ENCODE measurements at regions of chr4 and their contacts with region 1.

Region 1: GRCh38 chr4:141133146-141133998 is at the start of gene RNF150:
- DNase-seq: peak; percentile 29 to 88
- H3K4me3 ChIP-seq: peak within 1 kb of the TSS; percentile 89 to 92
- H3K27ac ChIP-seq: peak within 1 kb of the TSS; percentile 72 to 75
- H3K4me1 ChIP-seq: no peaks in the 10 kb centered on the region
- H3K27me3 ChIP-seq: no peaks in the 10 kb centered on the region
- CTCF ChIP-seq: peak; percentile 59 to 83 (median 71)
- total RNA-seq, gene RNF150: 31.2 TPM

Region 2: DNA sequence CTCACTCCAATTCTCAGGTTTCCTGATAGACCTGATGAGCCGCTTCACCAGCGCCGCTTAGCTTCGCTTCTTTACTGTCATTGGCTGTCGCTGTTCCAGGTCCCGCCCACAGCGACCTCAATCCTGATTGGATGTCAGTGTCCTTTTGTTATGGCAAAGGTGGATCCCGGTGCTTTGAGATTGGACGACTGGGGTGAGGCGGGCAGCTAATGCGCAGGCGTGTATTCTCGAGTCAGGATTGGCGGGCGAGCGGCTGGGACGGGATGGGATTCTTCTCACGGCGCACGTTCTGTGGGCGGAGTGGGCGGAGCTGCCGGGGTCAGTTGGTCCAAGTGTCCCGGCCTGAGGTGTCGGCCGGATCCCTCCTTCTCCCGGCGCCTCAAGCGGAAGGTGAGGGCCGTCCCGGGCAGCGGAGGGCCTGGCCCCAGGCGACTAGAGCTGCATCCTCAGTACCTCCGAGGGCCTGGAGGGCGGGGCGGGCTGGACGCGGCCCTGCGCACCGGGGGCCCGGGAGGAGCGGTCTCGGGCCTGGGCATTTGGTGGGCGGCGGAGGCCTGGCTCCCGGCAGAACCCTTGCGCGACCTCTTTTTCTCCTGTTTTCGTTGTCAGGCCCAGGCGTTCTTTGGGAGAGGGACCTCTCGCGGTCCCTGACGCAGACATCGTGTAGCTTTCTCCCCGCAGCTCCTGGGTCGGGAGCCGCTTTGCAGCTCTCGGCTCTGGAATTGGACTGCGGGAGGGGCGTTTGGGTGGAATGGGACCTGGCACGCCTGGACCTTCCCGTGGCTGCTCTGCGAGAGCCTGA is 759.8 kb before region 1 on chr4 and contains the start of gene SCOC:
- intact Hi-C with region 1: loop called (anchors 5 kb)
- DNase-seq: peak; percentile 99 to 100
- H3K4me3 ChIP-seq: peak within 1 kb of the TSS; percentile 93 to 99
- H3K27ac ChIP-seq: peak within 1 kb of the TSS; percentile 92 to 94
- H3K4me1 ChIP-seq: peaks cover 8 to 15% of the 10 kb centered on the region in 2 donors
- H3K27me3 ChIP-seq: no peaks in the 10 kb centered on the region
- CTCF ChIP-seq: no peak
- total RNA-seq, gene SCOC: 7.2 TPM

Region 3: DNA sequence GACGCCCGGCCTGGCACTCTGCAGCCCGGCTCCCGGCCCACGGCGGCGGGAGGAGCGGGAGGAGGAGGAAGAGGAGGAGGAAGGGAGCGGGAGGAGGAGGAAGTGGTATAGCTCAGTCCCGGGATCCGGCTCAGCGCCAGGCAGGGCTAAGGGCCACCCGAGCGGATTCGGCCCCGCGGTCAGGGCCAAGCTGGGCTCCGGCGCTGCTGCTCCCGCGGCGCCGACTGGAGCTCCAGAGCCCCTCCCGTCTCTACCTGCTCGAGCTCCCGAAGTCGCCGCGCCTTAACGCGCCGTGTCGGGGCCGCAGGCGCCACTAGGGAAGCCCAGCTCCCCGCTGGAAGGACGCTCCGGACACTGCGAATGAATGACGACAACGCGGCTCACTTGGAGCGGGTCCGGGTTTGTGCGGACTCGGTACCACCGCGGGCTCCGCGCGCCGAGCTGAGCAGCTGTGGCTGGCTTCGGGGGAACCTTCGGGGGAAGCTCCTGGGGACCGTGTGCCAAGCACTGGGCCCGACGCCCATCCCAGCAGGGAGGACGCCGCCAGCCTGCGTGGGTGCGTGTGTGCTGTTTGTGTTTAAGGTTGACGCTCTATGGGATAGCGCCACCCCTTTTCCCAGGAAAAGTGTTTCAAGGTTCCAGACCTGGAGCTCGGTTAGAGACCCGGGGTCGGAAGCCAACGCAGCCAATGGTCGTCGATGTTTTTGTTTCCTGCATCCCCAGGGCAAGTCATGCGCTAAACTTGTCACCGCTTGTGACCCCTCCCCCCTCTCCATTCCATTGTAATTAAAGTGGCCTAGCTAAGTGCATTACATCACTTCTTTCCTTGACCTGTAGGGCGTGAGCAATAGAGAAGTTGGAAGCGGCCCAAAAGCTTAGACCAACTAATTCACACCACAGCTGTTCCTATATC is 376.8 kb before region 1 on chr4 and contains the start of gene TBC1D9:
- intact Hi-C with region 1: loop called (anchors 5 kb)
- DNase-seq: peak; percentile 64 to 91
- H3K4me3 ChIP-seq: peak within 1 kb of the TSS; percentile 76 to 93
- H3K27ac ChIP-seq: peak within 1 kb of the TSS; percentile 96 to 98
- H3K4me1 ChIP-seq: peaks cover 0 to 8% of the 10 kb centered on the region in 2 donors
- H3K27me3 ChIP-seq: no peaks in the 10 kb centered on the region
- CTCF ChIP-seq: no peak
- total RNA-seq, gene TBC1D9: 25.5 TPM

Region 4: DNA sequence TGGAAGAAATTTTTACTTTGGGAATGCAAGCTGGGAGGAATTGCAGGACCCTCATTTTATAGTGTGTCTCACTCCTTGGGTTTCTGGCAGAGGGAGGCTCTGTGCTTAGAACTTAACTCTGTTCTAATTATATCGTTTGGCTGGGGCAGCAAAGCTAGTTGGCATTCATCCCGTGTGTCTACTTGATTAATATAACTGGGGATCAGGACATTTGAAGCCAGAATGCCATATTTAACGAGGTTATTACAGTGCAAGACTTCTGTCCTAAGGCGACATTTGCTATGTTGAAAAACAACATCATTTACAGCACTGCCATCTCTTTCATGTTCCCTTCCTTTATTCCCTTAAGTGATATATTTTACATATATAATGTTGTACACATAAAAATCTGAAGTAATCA is 198.1 kb before region 1 on chr4:
- intact Hi-C with region 1: loop called (anchors 5 kb)
- DNase-seq: peak in 1 of 2 donors; percentile 69
- H3K4me3 ChIP-seq: no peak overlapping the region
- H3K27ac ChIP-seq: peak overlapping the region in 1 of 2 donors; percentile 49
- H3K4me1 ChIP-seq: peaks cover 12 to 17% of the 10 kb centered on the region in 2 donors
- H3K27me3 ChIP-seq: no peaks in the 10 kb centered on the region
- CTCF ChIP-seq: no peak

Region 5: GRCh38 chr4:141046255-141046654 is 87.1 kb before region 1 on chr4:
- intact Hi-C with region 1: loop called (anchors 5 kb)
- DNase-seq: no peak
- H3K4me3 ChIP-seq: no peak overlapping the region
- H3K27ac ChIP-seq: no peak overlapping the region
- H3K4me1 ChIP-seq: no peaks in the 10 kb centered on the region
- H3K27me3 ChIP-seq: no peaks in the 10 kb centered on the region
- CTCF ChIP-seq: no peak

Measured in ascending aorta (tissue), 2 donors.